HCT116 (cell line): ENCODE measurements at regions of chr7 and their contacts with region 1.

Region 1: GRCh38 chr7:29345600-29345999 is 151.0 kb downstream of the CHN2 start:
- DNase-seq: peak; percentile 10
- ATAC-seq: peak; percentile 65
- H3K4me3 ChIP-seq: no peak overlapping the region
- H3K27ac ChIP-seq: no peak overlapping the region
- H3K4me1 ChIP-seq: peaks cover 0 to 8% of the 10 kb centered on the region in 2 experiments; a peak in 1 of 4 replicates
- H3K27me3 ChIP-seq: no peaks in the 10 kb centered on the region
- CTCF ChIP-seq: peak; percentile 38 to 44 (median 43); a peak in 4 of 6 replicates
- POLR2A ChIP-seq: no peak
- RAD21 ChIP-seq: peak; percentile 70

Region 2: DNA sequence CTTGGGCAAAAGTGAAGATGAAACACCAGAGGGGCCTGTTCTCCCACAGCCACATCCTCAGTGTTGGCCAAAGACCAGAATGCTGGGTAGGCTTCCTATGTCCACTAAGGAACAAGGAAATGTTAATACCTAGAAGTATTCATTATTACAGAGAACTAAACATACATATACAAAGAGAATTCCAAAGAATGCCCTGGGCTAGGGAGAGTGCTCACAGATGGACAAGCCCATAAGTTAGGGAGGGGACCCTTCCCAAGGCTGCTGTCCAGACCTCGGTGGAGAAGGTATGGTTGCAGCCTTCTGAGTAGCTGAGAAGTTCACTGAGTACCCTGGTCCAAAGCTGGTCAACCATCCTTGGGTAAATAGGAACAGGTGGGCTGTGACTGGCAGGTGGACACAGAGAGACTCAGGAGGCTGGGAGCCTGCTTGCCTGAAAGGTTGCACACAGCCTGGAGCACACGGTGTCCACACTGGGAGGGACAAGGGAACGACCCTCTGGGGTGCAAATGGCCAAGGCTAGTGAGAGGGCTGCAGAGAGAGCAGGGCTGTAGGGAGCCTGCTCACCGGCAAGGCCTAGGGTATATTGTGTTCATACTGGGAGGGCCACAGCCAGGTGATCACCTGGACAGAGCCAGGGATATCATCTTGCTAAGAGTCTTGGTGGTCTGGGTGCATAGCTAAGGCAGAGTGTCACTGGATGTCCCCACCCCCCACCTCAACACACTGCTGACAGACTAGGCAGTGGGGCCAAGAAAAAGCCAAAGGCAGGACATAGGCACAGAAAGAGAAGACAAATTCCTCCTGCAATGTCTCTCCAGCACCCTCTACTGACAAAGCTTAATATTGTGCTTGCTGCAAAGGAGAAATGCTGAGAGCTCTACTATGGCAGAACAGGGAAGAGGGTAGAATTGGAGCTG is 239.6 kb before region 1 on chr7:
- CTCF ChIA-PET with region 1: interaction called, 13 read pairs
- POLR2A ChIA-PET with region 1: no interaction called
- RAD21 ChIA-PET with region 1: no interaction called
- intact Hi-C with region 1: loop called (anchors 5 kb)
- DNase-seq: peak; percentile 39
- ATAC-seq: peak; percentile 90
- H3K4me3 ChIP-seq: no peak overlapping the region
- H3K27ac ChIP-seq: no peak overlapping the region
- H3K4me1 ChIP-seq: no peaks in the 10 kb centered on the region
- H3K27me3 ChIP-seq: no peaks in the 10 kb centered on the region
- CTCF ChIP-seq: peak; percentile 75 to 85 (median 79); a peak in 5 of 6 replicates
- POLR2A ChIP-seq: no peak
- RAD21 ChIP-seq: peak; percentile 83

Region 3: GRCh38 chr7:29113384-29114103 is 232.1 kb before region 1 on chr7:
- CTCF ChIA-PET with region 1: interaction called, 16 read pairs
- POLR2A ChIA-PET with region 1: no interaction called
- RAD21 ChIA-PET with region 1: interaction called in 1 of 2 experiments, 6 read pairs
- intact Hi-C with region 1: loop called (anchors 5 kb)
- DNase-seq: peak; percentile 36
- ATAC-seq: peak; percentile 89
- H3K4me3 ChIP-seq: no peak overlapping the region
- H3K27ac ChIP-seq: no peak overlapping the region
- H3K4me1 ChIP-seq: peaks cover 3 to 20% of the 10 kb centered on the region in 2 experiments; a peak in 3 of 4 replicates
- H3K27me3 ChIP-seq: no peaks in the 10 kb centered on the region
- CTCF ChIP-seq: peak; percentile 46 to 56 (median 54); a peak in 5 of 6 replicates
- POLR2A ChIP-seq: no peak
- RAD21 ChIP-seq: peak; percentile 74

Region 4: GRCh38 chr7:29189743-29190201 is 155.8 kb before region 1 on chr7:
- CTCF ChIA-PET with region 1: interaction called, 15 read pairs
- POLR2A ChIA-PET with region 1: no interaction called
- RAD21 ChIA-PET with region 1: interaction called in 1 of 2 experiments, 3 read pairs
- intact Hi-C with region 1: loop called (anchors 10 kb)
- DNase-seq: peak; percentile 45
- ATAC-seq: peak; percentile 95
- H3K4me3 ChIP-seq: no peak overlapping the region
- H3K27ac ChIP-seq: no peak overlapping the region
- H3K4me1 ChIP-seq: peaks cover 0 to 9% of the 10 kb centered on the region in 2 experiments; a peak in 2 of 4 replicates
- H3K27me3 ChIP-seq: no peaks in the 10 kb centered on the region
- CTCF ChIP-seq: peak; percentile 57 to 90 (median 78); a peak in 5 of 6 replicates
- POLR2A ChIP-seq: no peak
- RAD21 ChIP-seq: peak; percentile 72

Region 5: DNA sequence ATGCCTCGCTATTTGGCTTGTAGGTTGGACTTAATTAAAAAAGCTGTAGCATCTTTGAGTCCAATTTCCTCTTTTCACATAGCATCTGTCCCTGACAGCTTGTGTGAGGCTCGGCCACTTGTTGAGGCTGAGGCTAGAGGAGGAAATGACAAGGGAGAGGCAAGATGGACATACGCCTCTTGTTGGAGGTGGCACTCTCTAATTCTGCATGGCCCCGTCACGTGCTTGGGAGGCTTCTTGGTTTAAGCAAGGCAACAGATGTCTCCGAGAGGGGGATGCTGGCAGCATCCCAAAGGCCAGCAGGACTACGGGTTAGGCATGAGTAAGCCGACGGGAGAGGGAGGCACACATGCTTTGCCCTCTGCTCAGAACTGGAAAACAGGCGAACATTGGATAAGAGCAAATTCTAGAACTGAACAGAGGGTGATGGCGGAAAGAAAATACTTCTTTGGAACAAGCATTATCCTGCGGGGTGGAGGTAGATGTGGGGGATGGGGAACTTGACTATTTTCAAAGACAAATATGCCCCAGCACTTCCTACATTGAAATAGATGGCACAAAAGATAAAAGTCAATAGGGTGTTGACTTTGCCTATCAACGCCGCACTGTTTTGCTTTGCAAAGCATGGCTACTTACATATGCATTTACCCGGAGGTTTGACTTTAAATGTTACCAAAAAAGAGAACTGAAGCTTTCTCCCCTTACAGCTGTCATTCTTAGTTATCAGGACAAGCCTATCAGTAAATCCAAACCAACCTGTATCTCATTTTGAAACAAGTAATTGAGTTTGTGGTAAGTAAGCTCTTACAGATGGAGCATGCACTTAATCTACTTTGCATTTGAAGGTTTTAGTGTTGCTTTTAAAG is 56.2 kb before region 1 on chr7:
- CTCF ChIA-PET with region 1: no interaction called
- POLR2A ChIA-PET with region 1: no interaction called
- RAD21 ChIA-PET with region 1: no interaction called
- intact Hi-C with region 1: no loop called
- DNase-seq: no peak
- ATAC-seq: no peak
- H3K4me3 ChIP-seq: no peak overlapping the region
- H3K27ac ChIP-seq: no peak overlapping the region
- H3K4me1 ChIP-seq: peaks cover 15 to 27% of the 10 kb centered on the region in 2 experiments
- H3K27me3 ChIP-seq: no peaks in the 10 kb centered on the region
- CTCF ChIP-seq: no peak
- POLR2A ChIP-seq: no peak
- RAD21 ChIP-seq: no peak

Region 6: DNA sequence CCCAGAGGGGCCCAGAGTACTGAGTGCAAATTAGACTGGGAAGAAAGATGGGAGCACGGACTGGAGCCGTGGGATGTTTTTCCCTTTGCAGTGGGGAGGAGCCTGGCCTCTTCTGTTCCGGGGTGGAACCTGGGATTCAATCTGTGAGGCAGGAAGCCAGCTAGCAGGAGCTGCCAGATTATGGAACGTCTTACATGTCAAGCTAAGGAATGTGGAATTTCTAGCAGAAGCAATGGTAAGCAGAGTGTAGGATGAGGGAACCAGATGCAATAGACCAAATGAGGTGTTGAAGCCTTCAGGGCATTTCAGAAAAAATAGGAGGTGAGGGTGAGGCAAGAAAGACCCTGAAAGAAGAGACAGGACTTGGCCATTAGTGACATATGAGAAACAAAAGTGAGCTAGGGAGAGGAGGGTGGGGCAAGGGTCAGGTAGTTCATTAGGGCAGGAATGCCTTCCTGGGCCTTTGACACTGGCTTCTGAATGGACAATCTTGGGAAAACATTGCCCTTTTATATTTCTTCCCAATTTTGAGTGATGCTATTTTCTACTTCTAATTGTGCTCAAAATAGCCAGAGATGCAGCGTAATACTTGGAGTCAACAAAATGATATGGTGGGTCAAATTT is 45.5 kb before region 1 on chr7:
- CTCF ChIA-PET with region 1: no interaction called
- POLR2A ChIA-PET with region 1: no interaction called
- RAD21 ChIA-PET with region 1: no interaction called
- intact Hi-C with region 1: no loop called
- DNase-seq: no peak
- ATAC-seq: no peak
- H3K4me3 ChIP-seq: no peak overlapping the region
- H3K27ac ChIP-seq: no peak overlapping the region
- H3K4me1 ChIP-seq: no peaks in the 10 kb centered on the region; a peak in 1 of 4 replicates
- H3K27me3 ChIP-seq: no peaks in the 10 kb centered on the region; the same call in 1 of the 2 replicates
- CTCF ChIP-seq: no peak
- POLR2A ChIP-seq: no peak
- RAD21 ChIP-seq: no peak

Region 7: DNA sequence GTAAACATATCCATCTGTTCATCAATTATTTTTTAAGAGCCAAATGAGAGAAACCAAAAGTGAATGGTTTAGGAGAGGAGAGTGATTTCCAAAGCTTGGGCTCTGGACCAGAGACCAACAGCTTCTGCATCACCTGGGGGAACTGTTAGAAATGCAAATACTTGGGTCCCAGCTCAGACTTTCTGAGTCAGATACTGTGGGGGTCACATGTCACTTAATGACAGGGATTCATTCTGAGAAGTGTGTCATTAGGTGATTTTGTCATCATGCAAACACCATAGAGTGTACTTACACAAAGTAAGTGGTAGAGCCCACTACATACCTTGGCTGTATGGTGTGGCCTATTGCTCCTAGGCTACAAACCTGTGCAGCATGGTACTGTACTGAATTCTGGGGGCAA is 89.6 kb after region 1 on chr7:
- CTCF ChIA-PET with region 1: no interaction called
- POLR2A ChIA-PET with region 1: no interaction called
- RAD21 ChIA-PET with region 1: no interaction called
- intact Hi-C with region 1: no loop called
- DNase-seq: no peak
- ATAC-seq: no peak
- H3K4me3 ChIP-seq: no peak overlapping the region
- H3K27ac ChIP-seq: no peak overlapping the region
- H3K4me1 ChIP-seq: no peaks in the 10 kb centered on the region
- H3K27me3 ChIP-seq: no peaks in the 10 kb centered on the region
- CTCF ChIP-seq: no peak
- POLR2A ChIP-seq: no peak
- RAD21 ChIP-seq: no peak